PC-3 (cell line): ENCODE measurements at regions of chr18 and their contacts with region 1.

Region 1: GRCh38 chr18:59623456-59624368 is 73.5 kb downstream of the CCBE1 start:
- DNase-seq: peak; percentile 19
- ATAC-seq: no peak
- H3K4me3 ChIP-seq: no peak overlapping the region
- H3K27ac ChIP-seq: no peak overlapping the region
- H3K4me1 ChIP-seq: no peaks in the 10 kb centered on the region
- H3K27me3 ChIP-seq: no peaks in the 10 kb centered on the region
- CTCF ChIP-seq: no peak

Region 2: DNA sequence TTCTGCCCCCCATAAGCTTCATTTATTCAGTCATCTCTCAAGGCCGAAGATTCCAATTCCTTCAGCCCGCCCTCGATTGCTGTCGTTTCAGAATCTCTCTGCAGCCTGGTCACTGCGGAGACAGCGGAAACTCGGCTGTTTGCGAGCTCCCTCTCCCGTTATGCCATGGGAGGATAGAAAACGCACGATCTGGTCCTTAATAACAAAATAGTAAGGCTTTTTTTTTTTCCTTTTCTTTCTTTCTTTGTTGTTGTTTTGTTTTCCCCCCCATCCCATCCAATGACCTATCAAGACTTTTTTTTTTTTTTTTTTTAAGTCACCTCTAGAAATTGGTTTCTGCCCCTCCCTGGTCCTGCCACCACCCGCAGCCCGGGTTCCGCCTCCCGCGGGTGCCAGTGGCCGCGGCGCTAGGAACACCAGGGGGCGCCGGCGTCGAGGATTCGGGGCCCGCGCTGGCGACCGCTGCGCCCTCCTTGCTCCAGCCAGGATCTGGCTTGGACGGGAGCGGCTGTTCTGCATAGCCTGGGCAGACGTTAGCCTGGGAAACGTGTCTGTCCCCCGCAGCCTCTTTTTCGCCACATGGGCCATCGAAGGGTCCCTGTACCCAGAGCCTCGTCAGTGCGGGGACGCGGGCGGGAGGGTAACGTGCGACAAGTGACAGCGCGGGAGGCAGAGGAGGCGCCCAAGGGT is 315.3 kb before region 1 on chr18:
- CTCF ChIA-PET with region 1: interaction called, 11 read pairs
- POLR2A ChIA-PET with region 1: no interaction called
- intact Hi-C with region 1: no loop called
- DNase-seq: peak; percentile 81
- ATAC-seq: peak; percentile 97
- H3K4me3 ChIP-seq: peak overlapping the region; percentile 65
- H3K27ac ChIP-seq: no peak overlapping the region
- H3K4me1 ChIP-seq: no peaks in the 10 kb centered on the region
- H3K27me3 ChIP-seq: no peaks in the 10 kb centered on the region
- CTCF ChIP-seq: peak; percentile 87

Region 3: DNA sequence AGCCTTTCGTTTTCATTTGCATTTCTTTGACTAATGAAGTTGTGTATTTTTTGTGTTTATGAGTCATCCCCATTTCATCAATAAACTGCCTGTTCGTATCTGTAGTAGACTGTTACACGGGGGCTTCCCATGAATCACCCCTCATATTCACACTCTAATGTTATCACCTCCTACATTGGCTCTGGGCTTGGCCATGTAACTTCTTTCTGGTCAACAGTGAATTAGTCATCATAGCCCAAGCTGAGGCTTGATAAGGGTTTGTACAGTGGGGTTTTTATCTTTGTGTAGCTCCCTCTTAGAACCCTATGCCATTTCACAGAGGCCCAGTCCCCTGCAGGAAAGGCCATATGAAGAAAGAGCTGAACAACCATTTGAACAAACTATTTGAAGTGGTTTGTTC is 77.5 kb before region 1 on chr18:
- CTCF ChIA-PET with region 1: no interaction called
- POLR2A ChIA-PET with region 1: no interaction called
- intact Hi-C with region 1: no loop called
- DNase-seq: no peak
- ATAC-seq: no peak
- H3K4me3 ChIP-seq: no peak overlapping the region
- H3K27ac ChIP-seq: no peak overlapping the region
- H3K4me1 ChIP-seq: peaks cover 9% of the 10 kb centered on the region; the same call in 1 of the 2 replicates
- H3K27me3 ChIP-seq: no peaks in the 10 kb centered on the region
- CTCF ChIP-seq: no peak

Region 4: DNA sequence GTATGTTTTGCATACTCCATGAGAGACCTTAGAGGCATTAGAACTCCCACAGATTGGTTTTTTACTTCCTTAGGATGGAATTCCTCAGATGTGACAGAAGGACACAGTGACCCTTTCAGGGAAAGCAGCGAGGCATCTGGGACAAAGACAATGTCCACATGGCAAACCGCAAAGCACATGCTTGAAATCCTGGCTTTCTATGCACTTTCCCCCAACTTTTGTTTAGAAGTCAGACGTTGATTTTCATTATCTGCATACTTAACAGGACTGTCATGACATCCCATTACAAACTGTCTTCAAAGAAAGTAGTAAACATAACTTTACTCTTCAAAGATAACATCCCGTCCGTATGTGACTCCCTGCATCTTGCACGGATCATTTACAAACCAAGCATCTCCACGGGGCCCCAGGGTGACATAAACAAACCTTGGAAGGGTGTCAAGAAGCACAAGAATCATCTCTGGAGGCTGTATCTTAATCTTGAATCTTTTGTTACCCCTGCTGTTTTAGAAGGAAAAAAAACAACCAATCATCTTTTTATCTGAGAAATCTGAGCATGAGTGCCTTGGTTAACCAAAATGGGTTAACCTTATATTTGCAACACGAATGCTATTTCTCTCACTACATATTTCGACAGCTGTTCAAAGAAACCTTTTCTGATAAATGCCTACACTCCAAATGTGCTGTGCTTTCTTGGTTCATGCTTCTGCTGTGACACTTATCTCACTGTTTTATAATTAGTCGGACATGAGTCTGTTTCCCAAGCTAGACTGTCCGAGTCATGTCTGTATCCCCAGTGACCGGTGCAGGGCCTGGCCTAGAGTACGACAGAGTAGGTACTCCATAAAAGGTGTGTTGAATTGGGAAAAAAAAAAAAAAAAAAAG is 17.3 kb before region 1 on chr18:
- CTCF ChIA-PET with region 1: no interaction called
- POLR2A ChIA-PET with region 1: interaction called, 21 read pairs
- intact Hi-C with region 1: no loop called
- DNase-seq: no peak
- ATAC-seq: no peak
- H3K4me3 ChIP-seq: no peak overlapping the region
- H3K27ac ChIP-seq: no peak overlapping the region
- H3K4me1 ChIP-seq: no peaks in the 10 kb centered on the region
- H3K27me3 ChIP-seq: no peaks in the 10 kb centered on the region
- CTCF ChIP-seq: no peak